ENCODE measurements at regions of chr3 and their contacts with region 1.

Region 1: DNA sequence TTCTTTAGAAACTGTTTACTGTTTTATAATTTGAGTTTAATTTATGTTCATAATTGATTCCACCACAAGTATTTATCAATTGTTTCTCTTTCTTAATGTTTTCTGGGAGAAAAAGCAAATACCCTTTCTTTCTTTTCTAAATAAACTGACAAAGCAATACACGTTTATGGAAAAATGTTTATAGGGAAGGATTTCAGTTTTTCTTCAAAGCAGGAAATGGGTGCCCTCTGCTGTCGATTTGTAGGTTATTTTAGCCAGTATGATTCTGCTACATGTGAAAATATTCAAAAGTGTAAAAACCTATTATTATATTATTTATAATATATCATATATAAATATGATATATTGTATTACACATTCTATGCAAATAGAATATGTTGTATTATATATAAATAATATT is 921.0 kb upstream of the ROBO1 start:
- DNase-seq: peak; percentile 48
- H3K4me3 ChIP-seq: no peak overlapping the region
- H3K27ac ChIP-seq: no peak overlapping the region
- H3K27me3 ChIP-seq: no peaks in the 10 kb centered on the region
- CTCF ChIP-seq: peak; percentile 45

Region 2: GRCh38 chr3:79521238-79521848 is 1167.5 kb before region 1 on chr3:
- in situ Hi-C with region 1: loop called (anchors 25 kb)
- DNase-seq: peak; percentile 56
- H3K4me3 ChIP-seq: no peak overlapping the region
- H3K27ac ChIP-seq: no peak overlapping the region
- H3K27me3 ChIP-seq: no peaks in the 10 kb centered on the region
- CTCF ChIP-seq: peak; percentile 53

Region 3: DNA sequence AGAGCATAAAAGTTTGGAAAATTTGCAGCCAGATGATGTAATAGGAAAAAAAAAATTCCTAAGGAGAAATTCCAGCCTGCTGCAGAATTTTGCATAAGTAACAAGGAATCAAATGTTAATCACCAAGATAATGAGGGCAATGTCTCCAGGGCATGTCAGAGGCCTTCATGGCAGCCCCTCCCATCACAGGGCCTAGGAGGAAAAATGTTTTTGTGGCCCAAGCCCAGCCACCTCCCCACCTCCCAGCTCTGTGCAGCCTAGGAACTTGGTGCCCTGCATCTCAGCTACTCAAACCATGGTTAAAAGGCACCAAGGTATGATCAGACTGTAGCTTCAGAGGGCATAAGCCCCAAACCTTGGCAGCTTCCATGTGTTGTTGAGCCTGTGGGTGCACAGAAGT is 216.4 kb before region 1 on chr3:
- in situ Hi-C with region 1: no loop called
- DNase-seq: no peak
- H3K4me3 ChIP-seq: no peak overlapping the region
- H3K27ac ChIP-seq: no peak overlapping the region
- H3K27me3 ChIP-seq: no peaks in the 10 kb centered on the region
- CTCF ChIP-seq: no peak